CD4-positive, alpha-beta memory T cell (primary cell): ENCODE measurements at regions of chr5 and their contacts with region 1.

Region 1: DNA sequence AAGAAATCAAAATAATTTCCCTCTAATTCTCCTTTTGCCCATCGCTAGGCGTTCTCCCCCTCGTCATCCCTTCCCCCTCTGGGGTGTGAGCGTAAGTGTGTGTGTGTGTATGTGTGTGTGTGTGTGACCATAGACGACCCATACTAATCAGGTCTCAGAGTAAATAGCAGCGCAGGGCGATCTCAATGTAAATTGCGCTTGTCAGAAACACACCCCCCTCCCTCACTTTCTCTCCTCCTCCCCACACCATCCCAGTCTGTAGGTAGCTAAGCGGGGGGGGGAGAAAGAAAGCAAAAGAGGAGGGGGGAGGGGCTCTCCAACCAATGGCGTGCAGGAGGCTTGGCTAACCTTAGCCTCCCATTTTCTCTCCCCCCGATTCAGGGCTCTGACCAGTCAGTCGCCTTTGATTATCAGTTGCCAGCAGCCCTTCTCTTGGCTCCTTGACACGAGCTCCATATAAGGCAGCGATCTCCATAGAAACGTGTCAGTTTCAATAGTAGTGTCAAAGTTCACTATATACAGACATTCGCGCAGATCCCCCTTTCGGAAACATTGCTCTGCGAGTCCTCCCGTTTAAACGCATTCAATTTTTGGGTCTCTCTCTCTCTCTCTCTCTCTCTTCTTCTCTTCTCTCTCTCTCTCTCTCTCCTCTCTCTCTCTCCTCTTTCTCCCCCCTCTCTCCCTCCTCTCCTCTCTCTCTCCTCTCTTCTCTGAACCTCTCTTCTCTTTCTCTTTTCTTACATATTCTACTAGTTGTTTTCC is at the start of gene NR2F1:
- DNase-seq: no peak
- H3K4me3 ChIP-seq: peak within 1 kb of the TSS in 1 of 2 donors; percentile 18
- H3K4me3 Mint-ChIP-seq: peak within 1 kb of the TSS in 3 of 8 donors; percentile 68 to 81 (median 80)
- H3K27ac ChIP-seq: no peak within 1 kb of the TSS
- H3K27ac Mint-ChIP-seq: no peak within 1 kb of the TSS
- H3K4me1 ChIP-seq: peaks cover 52% of the 10 kb centered on the region
- H3K4me1 Mint-ChIP-seq: peaks cover 15 to 39% (median 26%) of the 10 kb centered on the region in 4 donors
- H3K27me3 ChIP-seq: peaks cover 75% of the 10 kb centered on the region
- H3K27me3 Mint-ChIP-seq: peaks cover 39 to 42% of the 10 kb centered on the region in 2 donors
- total RNA-seq, gene NR2F1: not detected

Region 2: GRCh38 chr5:93476251-93476742 is 106.6 kb before region 1 on chr5:
- CTCF ChIA-PET with region 1: no interaction called
- POLR2A ChIA-PET with region 1: no interaction called
- intact Hi-C with region 1: no loop called
- DNase-seq: no peak
- H3K4me3 ChIP-seq: no peak overlapping the region
- H3K4me3 Mint-ChIP-seq: no peak overlapping the region
- H3K27ac ChIP-seq: no peak overlapping the region
- H3K27ac Mint-ChIP-seq: no peak overlapping the region
- H3K4me1 ChIP-seq: no peaks in the 10 kb centered on the region
- H3K4me1 Mint-ChIP-seq: no peaks in the 10 kb centered on the region
- H3K27me3 ChIP-seq: no peaks in the 10 kb centered on the region
- H3K27me3 Mint-ChIP-seq: peaks cover 0 to 2% of the 10 kb centered on the region in 2 donors

Region 3: GRCh38 chr5:93519740-93520139 is 63.1 kb before region 1 on chr5:
- CTCF ChIA-PET with region 1: no interaction called
- POLR2A ChIA-PET with region 1: no interaction called
- intact Hi-C with region 1: no loop called
- DNase-seq: no peak
- H3K4me3 ChIP-seq: no peak overlapping the region
- H3K4me3 Mint-ChIP-seq: no peak overlapping the region
- H3K27ac ChIP-seq: no peak overlapping the region
- H3K27ac Mint-ChIP-seq: no peak overlapping the region
- H3K4me1 ChIP-seq: no peaks in the 10 kb centered on the region
- H3K4me1 Mint-ChIP-seq: no peaks in the 10 kb centered on the region
- H3K27me3 ChIP-seq: no peaks in the 10 kb centered on the region
- H3K27me3 Mint-ChIP-seq: peaks cover 4 to 8% of the 10 kb centered on the region in 2 donors

Region 4: GRCh38 chr5:93566091-93566490 is 16.8 kb before region 1 on chr5:
- CTCF ChIA-PET with region 1: no interaction called
- POLR2A ChIA-PET with region 1: no interaction called
- intact Hi-C with region 1: no loop called
- DNase-seq: no peak
- H3K4me3 ChIP-seq: no peak overlapping the region
- H3K4me3 Mint-ChIP-seq: no peak overlapping the region
- H3K27ac ChIP-seq: no peak overlapping the region
- H3K27ac Mint-ChIP-seq: no peak overlapping the region
- H3K4me1 ChIP-seq: peaks cover 8% of the 10 kb centered on the region
- H3K4me1 Mint-ChIP-seq: peaks cover under 1 to 11% (median 4%) of the 10 kb centered on the region in 4 donors
- H3K27me3 ChIP-seq: peaks cover 22% of the 10 kb centered on the region
- H3K27me3 Mint-ChIP-seq: peaks cover 30 to 37% of the 10 kb centered on the region in 2 donors

Region 5: GRCh38 chr5:93607367-93608258 is 24.8 kb after region 1 on chr5:
- CTCF ChIA-PET with region 1: no interaction called
- POLR2A ChIA-PET with region 1: interaction called, 4 read pairs
- intact Hi-C with region 1: loop called (anchors 2 kb)
- DNase-seq: peak in 3 of 5 donors; percentile 47 to 56 (median 52)
- H3K4me3 ChIP-seq: no peak overlapping the region
- H3K4me3 Mint-ChIP-seq: peak overlapping the region in 6 of 8 donors; percentile 2 to 59 (median 27)
- H3K27ac ChIP-seq: no peak overlapping the region
- H3K27ac Mint-ChIP-seq: peak overlapping the region in 1 of 7 donors; percentile 4
- H3K4me1 ChIP-seq: peaks cover 8% of the 10 kb centered on the region
- H3K4me1 Mint-ChIP-seq: peaks cover 15 to 29% (median 16%) of the 10 kb centered on the region in 4 donors
- H3K27me3 ChIP-seq: peaks cover 90% of the 10 kb centered on the region
- H3K27me3 Mint-ChIP-seq: peaks cover 72 to 80% of the 10 kb centered on the region in 2 donors

Region 6: DNA sequence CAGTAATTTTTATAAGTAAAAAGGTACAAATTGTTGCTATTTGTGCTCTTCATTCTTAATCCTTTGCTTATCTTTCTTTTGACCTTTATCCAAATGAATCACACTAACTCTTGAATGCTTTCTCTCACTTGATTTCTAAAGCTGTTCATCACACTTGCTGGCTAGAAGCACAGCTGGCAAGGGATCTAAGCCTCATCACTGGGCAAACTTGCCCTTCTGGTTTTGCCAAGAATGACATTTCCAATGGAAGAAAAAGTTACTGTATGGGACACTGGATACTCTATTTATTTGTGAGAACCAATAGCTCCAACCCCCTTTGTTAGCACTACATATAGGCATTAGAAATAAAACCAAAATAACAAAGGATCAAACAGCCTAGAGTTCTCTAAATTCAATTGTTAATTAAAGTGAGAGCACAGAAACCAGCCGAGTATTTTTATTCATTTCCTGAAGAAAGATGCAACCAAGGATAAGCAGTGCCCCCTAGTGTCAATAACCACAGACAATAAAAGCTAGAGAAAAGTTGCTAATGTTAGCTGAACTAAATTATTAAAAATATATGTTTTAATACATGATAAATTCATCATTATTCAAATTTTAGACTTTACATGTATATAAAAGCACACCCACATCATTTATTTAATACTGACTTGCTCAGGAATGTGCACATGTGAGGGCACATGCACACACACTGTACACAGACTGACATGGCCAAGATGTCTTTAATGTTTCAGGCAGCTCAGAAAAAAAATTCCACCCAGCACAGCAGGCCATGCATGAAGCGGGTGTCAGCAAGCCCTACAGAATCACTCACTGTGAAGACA is 218.3 kb after region 1 on chr5:
- CTCF ChIA-PET with region 1: interaction called, 13 read pairs
- POLR2A ChIA-PET with region 1: no interaction called
- intact Hi-C with region 1: loop called (anchors 1 kb)
- DNase-seq: peak in 4 of 5 donors; percentile 36 to 44 (median 38)
- H3K4me3 ChIP-seq: no peak overlapping the region
- H3K4me3 Mint-ChIP-seq: no peak overlapping the region
- H3K27ac ChIP-seq: no peak overlapping the region
- H3K27ac Mint-ChIP-seq: no peak overlapping the region
- H3K4me1 ChIP-seq: no peaks in the 10 kb centered on the region
- H3K4me1 Mint-ChIP-seq: peaks cover 0 to 3% (median 0%) of the 10 kb centered on the region in 4 donors
- H3K27me3 ChIP-seq: no peaks in the 10 kb centered on the region
- H3K27me3 Mint-ChIP-seq: no peaks in the 10 kb centered on the region

Region 7: DNA sequence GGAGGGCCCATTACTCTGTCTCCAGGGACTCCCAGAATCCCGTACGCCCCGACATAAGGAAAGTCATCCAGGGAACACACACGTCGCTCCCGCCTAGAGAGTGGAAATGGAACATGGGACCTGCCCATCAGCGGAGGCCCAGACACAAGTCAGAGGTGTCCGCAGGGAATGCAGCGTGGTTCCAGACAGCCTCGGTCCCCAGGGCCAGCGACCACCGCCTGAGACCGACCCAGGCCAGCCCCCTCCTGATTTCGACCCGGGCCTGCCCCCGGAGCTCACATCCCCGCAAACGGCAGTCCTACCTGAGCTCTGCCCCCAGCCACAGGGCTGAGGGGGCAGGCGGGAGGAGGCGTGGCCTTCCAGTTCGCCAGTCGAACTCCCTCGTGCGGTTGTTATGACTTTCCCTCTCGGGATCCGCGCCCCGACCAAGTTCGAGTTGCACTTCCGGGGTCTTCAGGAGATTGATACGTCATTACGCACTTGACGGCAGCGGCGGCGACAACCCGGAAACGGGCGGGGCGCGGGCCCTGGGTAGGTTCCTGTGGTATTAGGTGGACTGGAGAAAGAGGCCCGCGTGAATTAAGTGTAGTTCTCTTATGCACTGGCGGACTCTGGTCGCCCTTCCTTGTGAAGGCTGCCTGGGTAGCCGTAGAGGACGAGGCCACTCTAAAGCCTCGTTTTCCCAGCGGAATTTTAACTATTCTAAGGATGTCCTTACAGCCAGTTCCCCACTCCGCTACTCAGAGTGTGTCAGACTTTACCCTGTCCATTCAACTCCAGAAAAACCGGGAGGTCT is 528.5 kb after region 1 on chr5:
- CTCF ChIA-PET with region 1: no interaction called
- POLR2A ChIA-PET with region 1: no interaction called
- intact Hi-C with region 1: loop called (anchors 5 kb)
- DNase-seq: peak; percentile 88 to 94 (median 91)
- H3K4me3 ChIP-seq: peak overlapping the region; percentile 55 to 96
- H3K4me3 Mint-ChIP-seq: peak overlapping the region; percentile 94 to 97 (median 95)
- H3K27ac ChIP-seq: peak overlapping the region; percentile 77
- H3K27ac Mint-ChIP-seq: peak overlapping the region; percentile 93 to 97 (median 96)
- H3K4me1 ChIP-seq: peaks cover 26% of the 10 kb centered on the region
- H3K4me1 Mint-ChIP-seq: peaks cover 31 to 52% (median 41%) of the 10 kb centered on the region in 4 donors
- H3K27me3 ChIP-seq: no peaks in the 10 kb centered on the region
- H3K27me3 Mint-ChIP-seq: peaks cover 0 to 8% of the 10 kb centered on the region in 2 donors

Region 8: GRCh38 chr5:94618493-94619328 is 1035.9 kb after region 1 on chr5 and contains the starts of genes KIAA0825 and SLF1:
- CTCF ChIA-PET with region 1: no interaction called
- POLR2A ChIA-PET with region 1: no interaction called
- intact Hi-C with region 1: loop called (anchors 10 kb)
- DNase-seq: peak; percentile 85 to 91 (median 86)
- H3K4me3 ChIP-seq: peak within 1 kb of the TSS; percentile 25 to 67
- H3K4me3 Mint-ChIP-seq: peak within 1 kb of the TSS; percentile 89 to 98 (median 94)
- H3K27ac ChIP-seq: peak within 1 kb of the TSS; percentile 57
- H3K27ac Mint-ChIP-seq: peak within 1 kb of the TSS; percentile 86 to 96 (median 90)
- H3K4me1 ChIP-seq: peaks cover 48% of the 10 kb centered on the region
- H3K4me1 Mint-ChIP-seq: peaks cover 25 to 50% (median 41%) of the 10 kb centered on the region in 4 donors
- H3K27me3 ChIP-seq: no peaks in the 10 kb centered on the region
- H3K27me3 Mint-ChIP-seq: no peaks in the 10 kb centered on the region
- total RNA-seq, gene KIAA0825: 2.1 to 2.2 TPM
- total RNA-seq, gene SLF1: 14.3 to 16.5 TPM

Region 9: GRCh38 chr5:94740286-94740685 is 1157.4 kb after region 1 on chr5:
- CTCF ChIA-PET with region 1: no interaction called
- POLR2A ChIA-PET with region 1: no interaction called
- intact Hi-C with region 1: loop called (anchors 1 kb)
- DNase-seq: no peak
- H3K4me3 ChIP-seq: no peak overlapping the region
- H3K4me3 Mint-ChIP-seq: no peak overlapping the region
- H3K27ac ChIP-seq: no peak overlapping the region
- H3K27ac Mint-ChIP-seq: no peak overlapping the region
- H3K4me1 ChIP-seq: no peaks in the 10 kb centered on the region
- H3K4me1 Mint-ChIP-seq: no peaks in the 10 kb centered on the region
- H3K27me3 ChIP-seq: no peaks in the 10 kb centered on the region
- H3K27me3 Mint-ChIP-seq: peaks cover 0 to 3% of the 10 kb centered on the region in 2 donors

Region 10: GRCh38 chr5:94849821-94850736 is 1267.2 kb after region 1 on chr5:
- CTCF ChIA-PET with region 1: no interaction called
- POLR2A ChIA-PET with region 1: no interaction called
- intact Hi-C with region 1: loop called (anchors 5 kb)
- DNase-seq: peak; percentile 44 to 54 (median 47)
- H3K4me3 ChIP-seq: no peak overlapping the region
- H3K4me3 Mint-ChIP-seq: no peak overlapping the region
- H3K27ac ChIP-seq: no peak overlapping the region
- H3K27ac Mint-ChIP-seq: no peak overlapping the region
- H3K4me1 ChIP-seq: no peaks in the 10 kb centered on the region
- H3K4me1 Mint-ChIP-seq: peaks cover 0 to 5% (median 1%) of the 10 kb centered on the region in 4 donors
- H3K27me3 ChIP-seq: no peaks in the 10 kb centered on the region
- H3K27me3 Mint-ChIP-seq: peaks cover 0 to 2% of the 10 kb centered on the region in 2 donors